ENCODE measurements at regions of chr18 and their contacts with region 1.

Region 1: GRCh38 chr18:43563780-43564179 is 286.5 kb upstream of the SYT4 start:
- DNase-seq: peak; percentile 56
- H3K4me3 Mint-ChIP-seq: no peak overlapping the region
- H3K27ac Mint-ChIP-seq: no peak overlapping the region
- H3K4me1 Mint-ChIP-seq: no peaks in the 10 kb centered on the region
- H3K27me3 Mint-ChIP-seq: peaks cover 69% of the 10 kb centered on the region
- CTCF ChIP-seq: peak; percentile 65

Region 2: DNA sequence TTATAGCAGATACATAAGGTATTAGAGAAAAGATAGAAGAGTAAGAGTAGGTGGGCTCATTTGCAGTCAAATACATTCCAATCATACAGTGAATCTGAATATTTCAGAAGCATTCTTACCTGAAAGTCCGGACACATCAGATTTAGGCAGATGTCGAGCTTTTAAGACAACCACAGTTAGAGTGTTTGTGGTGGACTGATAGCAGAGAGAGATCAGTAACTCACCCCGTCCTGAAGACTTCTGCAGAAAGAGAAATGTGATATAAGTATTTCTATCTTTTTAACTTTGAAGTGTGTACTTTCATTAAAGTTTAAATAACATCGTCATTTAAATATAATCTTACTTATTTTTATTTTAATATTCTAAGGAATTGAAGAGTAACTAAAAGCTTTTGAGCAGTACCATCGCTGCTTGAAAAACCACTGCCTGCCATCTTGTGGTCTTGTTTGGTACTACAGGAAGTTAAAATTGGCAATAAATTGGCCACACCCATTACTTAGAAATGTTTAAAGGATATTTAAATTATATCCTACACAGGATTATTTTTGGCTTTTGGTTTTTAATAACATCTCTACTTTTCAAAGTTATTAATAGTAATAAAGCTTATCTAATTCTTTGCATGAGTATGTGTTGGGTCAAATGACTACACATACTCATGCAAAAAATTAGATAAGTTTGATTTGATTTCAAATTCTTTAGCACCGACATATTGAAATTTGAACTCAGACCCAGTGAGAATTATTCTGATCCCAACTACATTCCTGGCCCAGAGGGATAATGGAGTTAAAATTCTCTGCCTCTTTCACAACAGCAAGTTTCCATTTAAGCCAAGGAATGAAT is 292.0 kb before region 1 on chr18:
- CTCF ChIA-PET with region 1: interaction called, 5 read pairs
- POLR2A ChIA-PET with region 1: no interaction called
- intact Hi-C with region 1: loop called (anchors 5 kb)
- DNase-seq: peak; percentile 61
- H3K4me3 Mint-ChIP-seq: no peak overlapping the region
- H3K27ac Mint-ChIP-seq: no peak overlapping the region
- H3K4me1 Mint-ChIP-seq: no peaks in the 10 kb centered on the region
- H3K27me3 Mint-ChIP-seq: peaks cover 34% of the 10 kb centered on the region
- CTCF ChIP-seq: peak; percentile 74

Region 3: DNA sequence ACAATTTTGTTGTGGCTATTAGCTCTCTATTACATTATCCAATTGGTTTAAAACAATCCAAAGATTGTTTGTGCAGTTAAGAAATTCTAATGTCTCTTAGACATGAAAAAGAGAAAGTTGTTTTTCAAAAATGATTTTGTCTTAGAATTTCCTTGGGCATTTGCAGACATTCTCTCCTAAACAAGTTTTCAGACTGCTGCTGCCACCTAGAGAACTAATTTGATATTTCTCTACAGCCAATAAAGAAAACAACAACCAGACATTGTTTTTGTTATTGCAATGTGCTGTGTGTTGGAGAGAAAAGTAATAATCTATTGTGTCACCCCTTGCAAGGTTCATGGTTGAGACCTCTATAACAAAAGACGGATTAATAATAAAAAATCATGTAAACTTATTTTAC is 167.5 kb before region 1 on chr18:
- CTCF ChIA-PET with region 1: no interaction called
- POLR2A ChIA-PET with region 1: no interaction called
- intact Hi-C with region 1: loop called (anchors 5 kb)
- DNase-seq: peak; percentile 33
- H3K4me3 Mint-ChIP-seq: no peak overlapping the region
- H3K27ac Mint-ChIP-seq: no peak overlapping the region
- H3K4me1 Mint-ChIP-seq: peaks cover 10% of the 10 kb centered on the region
- H3K27me3 Mint-ChIP-seq: peaks cover 20% of the 10 kb centered on the region
- CTCF ChIP-seq: peak; percentile 49

Region 4: GRCh38 chr18:43422518-43422917 is 141.3 kb before region 1 on chr18:
- CTCF ChIA-PET with region 1: interaction called, 3 read pairs
- POLR2A ChIA-PET with region 1: no interaction called
- intact Hi-C with region 1: loop called (anchors 5 kb)
- DNase-seq: peak; percentile 27
- H3K4me3 Mint-ChIP-seq: no peak overlapping the region
- H3K27ac Mint-ChIP-seq: no peak overlapping the region
- H3K4me1 Mint-ChIP-seq: no peaks in the 10 kb centered on the region
- H3K27me3 Mint-ChIP-seq: peaks cover 41% of the 10 kb centered on the region
- CTCF ChIP-seq: no peak

Region 5: GRCh38 chr18:43587538-43588153 is 23.9 kb after region 1 on chr18:
- CTCF ChIA-PET with region 1: interaction called, 372 read pairs
- POLR2A ChIA-PET with region 1: interaction called, 5 read pairs
- intact Hi-C with region 1: no loop called
- DNase-seq: peak; percentile 52
- H3K4me3 Mint-ChIP-seq: no peak overlapping the region
- H3K27ac Mint-ChIP-seq: no peak overlapping the region
- H3K4me1 Mint-ChIP-seq: no peaks in the 10 kb centered on the region
- H3K27me3 Mint-ChIP-seq: peaks cover 30% of the 10 kb centered on the region
- CTCF ChIP-seq: peak; percentile 53

Region 6: DNA sequence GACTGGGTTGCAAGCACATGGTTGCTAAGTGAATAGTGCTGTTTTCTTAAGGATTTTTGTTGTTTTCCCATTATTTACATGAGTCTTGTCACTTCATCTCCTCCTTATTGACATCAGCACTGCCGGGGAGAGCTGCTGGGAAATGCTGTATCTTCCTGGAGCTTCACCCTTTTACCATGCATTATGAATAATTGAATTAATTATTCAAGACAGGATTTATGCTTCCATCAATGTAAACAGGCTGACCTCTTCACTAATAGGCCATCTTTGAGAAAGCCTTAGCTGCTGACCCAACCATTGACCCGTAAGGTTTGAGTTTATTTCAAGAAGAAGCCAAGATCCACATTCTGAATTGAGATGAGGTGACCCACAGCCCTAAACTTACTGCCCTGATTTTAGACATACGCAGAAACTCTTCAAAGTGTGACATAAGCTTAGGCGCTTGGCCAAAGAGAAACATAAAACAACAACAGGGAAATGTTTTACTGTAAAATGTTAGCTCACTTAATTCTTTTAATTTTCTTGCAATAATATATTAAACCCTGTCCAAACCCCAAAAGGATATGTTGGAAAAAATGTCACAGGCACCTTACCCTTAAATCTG is 79.0 kb after region 1 on chr18:
- CTCF ChIA-PET with region 1: no interaction called
- POLR2A ChIA-PET with region 1: no interaction called
- intact Hi-C with region 1: no loop called
- DNase-seq: no peak
- H3K4me3 Mint-ChIP-seq: no peak overlapping the region
- H3K27ac Mint-ChIP-seq: no peak overlapping the region
- H3K4me1 Mint-ChIP-seq: no peaks in the 10 kb centered on the region
- H3K27me3 Mint-ChIP-seq: no peaks in the 10 kb centered on the region
- CTCF ChIP-seq: no peak